A673 (cell line): ENCODE measurements at regions of chr6 and their contacts with region 1.

Region 1: DNA sequence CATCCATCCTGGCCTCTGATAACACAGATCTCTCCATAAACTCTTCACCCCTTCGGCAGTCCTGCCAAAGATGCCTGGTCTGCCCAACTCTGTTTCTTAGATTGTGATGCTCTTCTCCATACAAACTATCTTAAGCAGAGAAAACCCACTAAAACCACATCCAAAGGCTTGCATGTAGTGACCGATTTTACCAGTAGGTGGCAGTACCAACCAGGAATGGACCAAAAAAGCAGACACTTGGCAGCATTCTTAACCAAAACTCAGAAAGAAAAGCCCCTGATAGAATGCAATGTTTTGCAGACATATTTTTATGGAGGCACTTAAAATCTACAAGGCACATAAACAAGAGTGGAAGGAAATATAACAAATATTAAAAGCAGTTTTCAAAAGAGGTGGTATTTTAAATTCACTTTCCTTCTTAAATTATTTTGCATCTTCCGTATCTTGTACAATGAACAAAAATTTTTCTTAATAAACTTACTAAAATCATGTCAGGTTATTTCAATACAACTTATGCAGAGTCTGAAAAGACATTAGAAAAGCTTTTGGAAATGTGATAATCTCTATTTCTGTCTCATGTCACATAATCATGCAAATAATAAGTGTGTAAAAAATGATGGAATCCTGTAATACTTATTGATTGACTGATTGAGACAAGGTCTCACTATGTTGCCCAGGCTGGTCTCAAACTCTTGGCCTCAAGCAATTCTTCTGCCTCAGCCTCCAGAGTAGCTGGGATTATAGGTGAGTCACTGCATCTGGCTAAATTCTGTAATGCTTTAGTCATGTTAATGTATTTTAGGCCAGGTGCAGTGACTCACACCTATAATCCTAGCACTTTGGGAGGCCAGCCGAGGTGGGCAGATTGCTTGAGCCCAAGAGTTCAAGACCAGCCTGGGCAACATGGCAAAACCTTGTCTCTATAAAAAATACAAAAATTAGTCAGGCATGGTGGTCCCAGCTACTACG is 29.4 kb downstream of the LRP11 start:
- DNase-seq: peak; percentile 75
- H3K4me3 ChIP-seq: no peak overlapping the region
- H3K27ac ChIP-seq: no peak overlapping the region
- H3K4me1 ChIP-seq: no peaks in the 10 kb centered on the region
- H3K27me3 ChIP-seq: no peaks in the 10 kb centered on the region
- CTCF ChIP-seq: peak; percentile 91

Region 2: DNA sequence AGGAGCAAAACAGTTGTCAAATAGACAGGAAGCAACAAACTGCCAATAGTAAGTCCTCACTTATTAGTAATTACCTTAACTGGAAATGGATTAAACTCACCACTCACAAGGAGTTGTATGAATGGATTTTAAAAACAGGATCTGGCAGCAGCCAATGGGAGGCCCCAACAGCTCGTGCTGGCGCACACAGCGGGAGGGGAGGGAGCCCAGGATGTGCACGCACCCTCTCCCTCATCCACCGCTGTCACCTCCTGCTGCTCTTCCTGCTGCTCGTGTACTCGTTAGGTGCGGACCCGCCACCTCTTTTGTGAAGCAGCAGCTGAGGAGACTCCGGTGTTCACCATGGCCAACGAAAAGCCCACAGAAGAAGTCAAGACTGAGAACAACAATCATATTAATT is 434.7 kb before region 1 on chr6 and contains the start of gene SUMO4:
- CTCF ChIA-PET with region 1: no interaction called
- POLR2A ChIA-PET with region 1: no interaction called
- intact Hi-C with region 1: no loop called
- DNase-seq: no peak
- H3K4me3 ChIP-seq: no peak within 1 kb of the TSS
- H3K27ac ChIP-seq: no peak within 1 kb of the TSS
- H3K4me1 ChIP-seq: no peaks in the 10 kb centered on the region
- H3K27me3 ChIP-seq: no peaks in the 10 kb centered on the region
- CTCF ChIP-seq: no peak
- total RNA-seq, gene SUMO4: 1.9 and 2.8 TPM in 2 replicates

Region 3: GRCh38 chr6:149863697-149864577 is 29.1 kb after region 1 on chr6 and contains the start of gene LRP11:
- CTCF ChIA-PET with region 1: no interaction called
- POLR2A ChIA-PET with region 1: no interaction called
- intact Hi-C with region 1: loop called (anchors 2 kb)
- DNase-seq: peak; percentile 88
- H3K4me3 ChIP-seq: peak within 1 kb of the TSS; percentile 92
- H3K27ac ChIP-seq: peak within 1 kb of the TSS; percentile 82
- H3K4me1 ChIP-seq: peaks cover 19% of the 10 kb centered on the region
- H3K27me3 ChIP-seq: no peaks in the 10 kb centered on the region
- CTCF ChIP-seq: no peak
- total RNA-seq, gene LRP11: 53.2 and 56.1 TPM in 2 replicates

Region 4: GRCh38 chr6:149925974-149926777 is 91.4 kb after region 1 on chr6:
- CTCF ChIA-PET with region 1: no interaction called
- POLR2A ChIA-PET with region 1: no interaction called
- intact Hi-C with region 1: loop called (anchors 1 kb)
- DNase-seq: peak; percentile 90
- H3K4me3 ChIP-seq: peak overlapping the region; percentile 59
- H3K27ac ChIP-seq: no peak overlapping the region
- H3K4me1 ChIP-seq: peaks cover 12% of the 10 kb centered on the region
- H3K27me3 ChIP-seq: peaks cover 19% of the 10 kb centered on the region
- CTCF ChIP-seq: peak; percentile 93

Region 5: DNA sequence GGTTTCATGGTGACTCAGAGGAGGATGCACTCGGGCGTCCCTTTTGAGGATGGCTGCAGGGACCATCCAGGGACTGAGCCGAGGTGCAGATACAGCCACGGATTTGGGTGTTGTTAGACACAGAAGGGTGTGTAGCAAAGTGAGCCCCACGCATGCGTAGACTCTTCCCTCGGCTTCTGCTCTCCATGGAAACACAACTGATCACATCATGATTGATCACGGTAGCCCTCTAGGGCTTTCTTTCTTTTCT is 128.3 kb after region 1 on chr6:
- CTCF ChIA-PET with region 1: no interaction called
- POLR2A ChIA-PET with region 1: no interaction called
- intact Hi-C with region 1: no loop called
- DNase-seq: peak; percentile 67
- H3K4me3 ChIP-seq: peak overlapping the region; percentile 56
- H3K27ac ChIP-seq: peak overlapping the region; percentile 87
- H3K4me1 ChIP-seq: peaks cover 7% of the 10 kb centered on the region
- H3K27me3 ChIP-seq: peaks cover 18% of the 10 kb centered on the region
- CTCF ChIP-seq: no peak

Region 6: DNA sequence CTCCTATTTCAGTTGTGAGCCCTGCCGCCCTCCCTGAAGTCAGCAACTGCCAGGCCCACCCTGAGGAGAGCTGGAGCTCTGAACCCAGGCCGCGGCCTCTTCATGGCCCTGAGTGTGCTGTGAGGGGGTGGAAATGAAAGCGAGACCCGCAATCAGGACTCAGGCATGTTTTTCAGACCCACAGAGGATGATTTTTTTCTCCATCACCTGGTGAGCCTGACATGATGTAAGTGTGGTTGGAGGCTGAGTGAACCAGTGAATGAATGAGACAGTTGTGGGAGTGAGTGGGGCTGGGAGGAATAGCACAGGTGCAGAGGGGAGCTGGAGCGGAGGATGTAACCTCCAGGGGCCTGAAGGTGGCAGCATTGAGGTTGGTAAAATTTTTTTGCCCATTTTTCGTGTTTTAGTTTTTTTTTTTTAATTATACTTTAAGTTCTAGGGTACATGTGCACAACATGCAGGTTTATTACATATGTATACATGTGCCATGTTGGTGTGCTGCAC is 172.2 kb after region 1 on chr6:
- CTCF ChIA-PET with region 1: no interaction called
- POLR2A ChIA-PET with region 1: interaction called, 28 read pairs
- intact Hi-C with region 1: no loop called
- DNase-seq: peak; percentile 31
- H3K4me3 ChIP-seq: no peak overlapping the region
- H3K27ac ChIP-seq: no peak overlapping the region
- H3K4me1 ChIP-seq: no peaks in the 10 kb centered on the region
- H3K27me3 ChIP-seq: peaks cover 19% of the 10 kb centered on the region
- CTCF ChIP-seq: peak; percentile 54

Region 7: GRCh38 chr6:150016324-150017185 is 181.8 kb after region 1 on chr6:
- CTCF ChIA-PET with region 1: no interaction called
- POLR2A ChIA-PET with region 1: no interaction called
- intact Hi-C with region 1: loop called (anchors 1 kb)
- DNase-seq: peak; percentile 82
- H3K4me3 ChIP-seq: no peak overlapping the region
- H3K27ac ChIP-seq: no peak overlapping the region
- H3K4me1 ChIP-seq: no peaks in the 10 kb centered on the region
- H3K27me3 ChIP-seq: peaks cover 54% of the 10 kb centered on the region
- CTCF ChIP-seq: peak; percentile 60